ACHN (cell line): ENCODE measurements at regions of chr12 and their contacts with region 1.

Region 1: DNA sequence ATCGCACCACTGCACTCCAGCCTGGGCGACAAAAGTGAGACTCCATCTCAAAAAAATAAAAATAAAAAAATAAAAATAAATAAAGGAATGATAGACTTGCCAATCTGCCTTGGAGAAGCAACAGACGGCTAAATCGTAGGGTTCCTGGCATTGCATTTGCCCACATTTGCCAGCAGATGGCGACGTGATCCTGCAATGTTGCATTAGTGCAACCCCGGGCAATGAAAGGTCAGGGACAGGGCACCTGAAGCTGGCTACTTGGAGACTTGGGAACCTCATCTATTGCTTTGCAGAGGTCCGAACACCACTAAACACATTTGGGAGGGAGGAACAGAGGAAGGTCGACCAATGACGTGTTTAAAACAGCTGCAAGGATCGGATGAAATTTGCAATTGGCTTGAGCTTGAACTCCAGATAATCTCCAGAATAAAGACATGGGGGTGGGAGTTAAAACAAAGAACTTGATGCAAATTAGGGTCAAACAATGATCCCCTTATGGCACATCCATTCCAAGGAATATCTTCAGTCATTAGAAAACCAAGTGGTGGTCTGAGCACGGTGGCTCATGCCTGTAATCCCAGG is 34.6 kb downstream of the SPRING1 start:
- DNase-seq: peak; percentile 74

Region 2: DNA sequence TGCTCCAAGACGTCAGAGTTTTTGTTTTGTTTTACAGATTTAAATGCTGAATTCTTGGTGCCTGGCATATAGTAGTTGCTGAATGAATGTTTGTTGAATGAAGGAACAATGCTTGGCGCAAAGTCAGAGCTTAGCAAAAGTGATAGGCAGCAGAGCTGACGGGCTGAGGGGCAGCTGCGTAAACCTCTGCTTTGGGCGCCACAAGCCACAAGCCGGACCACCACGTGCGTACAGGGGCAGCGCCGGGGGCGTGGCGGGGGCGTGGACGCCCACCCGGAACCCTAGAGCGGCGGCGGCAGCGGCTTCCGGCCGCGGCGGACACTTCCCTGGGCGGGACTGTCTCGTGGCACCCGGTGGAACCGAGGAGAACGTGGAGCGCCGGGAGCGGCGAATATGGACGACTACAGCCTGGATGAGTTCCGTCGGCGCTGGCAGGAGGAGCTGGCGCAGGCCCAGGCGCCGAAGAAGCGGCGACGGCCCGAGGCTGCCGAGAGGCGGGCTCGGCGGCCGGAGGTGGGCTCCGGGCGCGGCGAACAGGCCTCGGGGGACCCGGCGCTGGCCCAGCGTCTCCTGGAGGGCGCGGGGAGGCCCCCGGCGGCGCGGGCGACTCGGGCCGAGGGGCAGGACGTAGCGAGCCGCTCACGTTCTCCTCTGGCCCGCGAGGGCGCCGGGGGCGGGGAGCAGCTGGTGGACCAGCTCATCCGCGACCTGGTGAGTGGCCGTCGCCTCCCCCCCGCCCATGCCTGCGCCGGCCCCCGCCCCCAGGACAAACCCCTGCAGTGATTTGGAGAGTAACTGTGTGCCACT is 207.5 kb after region 1 on chr12 and contains the start of gene FBXW8:
- in situ Hi-C with region 1: loop called (anchors 25 kb)
- DNase-seq: peak; percentile 83